ENCODE measurements at regions of chr14 and their contacts with region 1.

Region 1: DNA sequence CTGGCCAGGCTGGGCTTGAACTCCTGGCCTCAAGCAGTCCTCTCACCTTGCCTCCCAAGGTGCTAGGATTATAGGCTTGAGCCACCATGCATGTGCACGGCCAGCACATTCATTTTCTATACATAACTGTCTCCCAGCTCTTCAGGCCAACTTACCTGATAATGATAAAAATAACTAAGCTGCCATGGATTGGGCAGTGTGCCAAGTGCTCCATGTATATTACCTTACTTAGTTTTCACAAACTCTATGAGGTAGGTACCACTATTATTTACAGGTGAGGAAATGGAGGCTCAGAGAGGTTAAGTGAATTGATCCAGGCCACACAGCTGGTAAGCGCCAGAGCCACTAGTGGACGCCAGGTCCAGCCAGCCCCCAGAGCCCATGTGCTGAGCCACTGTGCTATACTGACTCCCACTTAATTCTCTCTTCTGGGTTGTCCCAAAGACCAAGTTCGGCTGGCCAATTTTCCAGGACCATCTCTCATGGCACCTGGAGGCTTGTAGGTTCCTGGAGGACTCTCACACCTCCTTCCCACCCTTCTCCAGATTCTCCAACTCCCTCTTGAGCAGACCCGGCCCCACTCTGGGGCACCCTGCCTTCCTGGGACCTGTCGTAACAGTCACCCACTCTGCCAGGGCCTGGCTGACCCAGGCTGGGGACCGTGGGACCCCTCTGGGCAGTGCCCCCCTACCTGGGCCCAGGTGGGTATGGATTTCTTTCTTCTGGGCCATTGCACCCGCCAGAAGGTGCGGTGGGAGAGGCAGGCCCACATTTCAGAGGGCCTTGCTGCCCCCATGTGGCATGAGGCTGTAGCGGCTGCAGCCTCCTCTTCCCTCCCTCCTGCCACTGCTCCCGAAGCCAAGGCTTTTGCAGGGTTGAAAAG is 30.2 kb upstream of the CIPC start:
- DNase-seq: peak; percentile 82
- H3K4me3 ChIP-seq: no peak overlapping the region
- H3K27ac ChIP-seq: no peak overlapping the region
- H3K4me1 ChIP-seq: peaks cover 6% of the 10 kb centered on the region
- H3K27me3 ChIP-seq: no peaks in the 10 kb centered on the region

Region 2: GRCh38 chr14:76812211-76813044 is 255.4 kb before region 1 on chr14 and contains the start of gene ANGEL1:
- in situ Hi-C with region 1: no loop called
- DNase-seq: peak; percentile 94
- H3K4me3 ChIP-seq: peak within 1 kb of the TSS; percentile 69
- H3K27ac ChIP-seq: no peak within 1 kb of the TSS
- H3K4me1 ChIP-seq: no peaks in the 10 kb centered on the region
- H3K27me3 ChIP-seq: peaks cover 5% of the 10 kb centered on the region; the same call in 1 of the 2 replicates
- total RNA-seq, gene ANGEL1: 3.7 and 7.3 TPM in 2 replicates

Region 3: GRCh38 chr14:76882651-76883050 is 185.2 kb before region 1 on chr14:
- in situ Hi-C with region 1: loop called (anchors 10 kb)
- DNase-seq: no peak
- H3K4me3 ChIP-seq: no peak overlapping the region
- H3K27ac ChIP-seq: no peak overlapping the region
- H3K4me1 ChIP-seq: peaks cover 7% of the 10 kb centered on the region; the same call in 1 of the 2 replicates
- H3K27me3 ChIP-seq: no peaks in the 10 kb centered on the region

Region 4: GRCh38 chr14:76918751-76919543 is 148.9 kb before region 1 on chr14:
- in situ Hi-C with region 1: loop called (anchors 10 kb)
- DNase-seq: peak; percentile 99
- H3K4me3 ChIP-seq: peak overlapping the region; percentile 41
- H3K27ac ChIP-seq: peak overlapping the region; percentile 98
- H3K4me1 ChIP-seq: peaks cover 36% of the 10 kb centered on the region
- H3K27me3 ChIP-seq: no peaks in the 10 kb centered on the region

Region 5: DNA sequence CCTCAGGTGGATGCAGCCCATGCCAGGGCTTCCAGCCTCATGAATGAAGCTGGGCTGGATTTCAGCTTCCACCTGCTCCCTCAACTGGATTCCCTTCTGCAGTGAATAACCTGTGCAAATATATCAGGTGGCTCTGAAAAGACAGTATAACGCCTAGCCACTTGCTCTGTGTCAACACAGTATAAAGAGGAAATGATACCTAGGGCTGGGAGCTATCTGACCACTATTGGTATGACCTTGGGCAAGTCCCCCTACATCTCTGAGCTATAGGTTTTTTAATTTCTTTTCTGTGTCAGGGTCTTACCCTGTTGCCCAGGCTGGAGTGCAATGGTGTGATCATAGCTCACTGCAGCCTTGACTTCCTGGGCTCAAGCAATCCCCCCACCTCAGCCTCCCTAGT is 410.9 kb after region 1 on chr14:
- in situ Hi-C with region 1: no loop called
- DNase-seq: no peak
- H3K4me3 ChIP-seq: no peak overlapping the region
- H3K27ac ChIP-seq: no peak overlapping the region
- H3K4me1 ChIP-seq: no peaks in the 10 kb centered on the region
- H3K27me3 ChIP-seq: peaks cover 8% of the 10 kb centered on the region; the same call in 1 of the 2 replicates